Sciatic nerve (tissue), 2 donors: ENCODE measurements at regions of chr4 and their contacts with region 1.

Region 1: GRCh38 chr4:89123451-89123851 is 12.1 kb downstream of the TIGD2 start:
- DNase-seq: no peak
- ATAC-seq: peak; percentile 77

Region 2: DNA sequence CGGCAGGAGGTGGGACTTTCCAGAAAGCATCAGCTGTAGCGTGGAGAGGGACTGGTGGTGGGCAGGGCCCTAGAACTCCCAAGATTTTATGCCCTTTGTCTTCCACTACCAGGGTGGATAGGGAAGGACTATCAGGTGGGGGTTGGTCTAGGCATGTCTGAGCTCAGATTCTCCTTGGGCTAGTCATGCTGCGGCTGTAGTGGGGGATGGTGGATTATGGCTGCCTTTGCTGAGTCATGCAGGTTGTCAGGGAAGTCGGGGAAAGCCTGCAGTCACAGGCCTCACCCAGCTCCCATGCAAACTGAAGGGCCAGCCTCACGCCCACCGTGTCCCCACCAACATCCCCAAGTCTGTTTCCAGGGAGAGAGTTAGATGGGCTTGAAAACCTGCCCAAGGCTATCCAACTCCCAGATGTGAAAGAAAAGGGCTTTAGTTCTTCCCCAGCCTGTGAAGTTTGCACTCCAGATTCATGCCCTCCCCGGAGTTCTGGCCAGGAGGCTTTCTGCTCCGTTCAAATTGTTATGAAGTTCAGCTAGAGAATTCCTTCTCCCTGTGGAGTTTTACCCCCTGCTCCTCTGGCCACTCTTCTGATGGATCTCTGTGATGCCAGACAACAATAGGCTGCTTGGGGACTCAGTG is 1304.1 kb before region 1 on chr4:
- intact Hi-C with region 1: no loop called
- DNase-seq: no peak
- ATAC-seq: no peak

Region 3: GRCh38 chr4:89319756-89320155 is 196.3 kb after region 1 on chr4:
- intact Hi-C with region 1: loop called (anchors 2 kb)
- DNase-seq: no peak
- ATAC-seq: no peak

Region 4: GRCh38 chr4:90855111-90855510 is 1731.7 kb after region 1 on chr4:
- intact Hi-C with region 1: no loop called
- DNase-seq: no peak
- ATAC-seq: no peak